B cell (primary cell): ENCODE measurements at regions of chr5 and their contacts with region 1.

Region 1: DNA sequence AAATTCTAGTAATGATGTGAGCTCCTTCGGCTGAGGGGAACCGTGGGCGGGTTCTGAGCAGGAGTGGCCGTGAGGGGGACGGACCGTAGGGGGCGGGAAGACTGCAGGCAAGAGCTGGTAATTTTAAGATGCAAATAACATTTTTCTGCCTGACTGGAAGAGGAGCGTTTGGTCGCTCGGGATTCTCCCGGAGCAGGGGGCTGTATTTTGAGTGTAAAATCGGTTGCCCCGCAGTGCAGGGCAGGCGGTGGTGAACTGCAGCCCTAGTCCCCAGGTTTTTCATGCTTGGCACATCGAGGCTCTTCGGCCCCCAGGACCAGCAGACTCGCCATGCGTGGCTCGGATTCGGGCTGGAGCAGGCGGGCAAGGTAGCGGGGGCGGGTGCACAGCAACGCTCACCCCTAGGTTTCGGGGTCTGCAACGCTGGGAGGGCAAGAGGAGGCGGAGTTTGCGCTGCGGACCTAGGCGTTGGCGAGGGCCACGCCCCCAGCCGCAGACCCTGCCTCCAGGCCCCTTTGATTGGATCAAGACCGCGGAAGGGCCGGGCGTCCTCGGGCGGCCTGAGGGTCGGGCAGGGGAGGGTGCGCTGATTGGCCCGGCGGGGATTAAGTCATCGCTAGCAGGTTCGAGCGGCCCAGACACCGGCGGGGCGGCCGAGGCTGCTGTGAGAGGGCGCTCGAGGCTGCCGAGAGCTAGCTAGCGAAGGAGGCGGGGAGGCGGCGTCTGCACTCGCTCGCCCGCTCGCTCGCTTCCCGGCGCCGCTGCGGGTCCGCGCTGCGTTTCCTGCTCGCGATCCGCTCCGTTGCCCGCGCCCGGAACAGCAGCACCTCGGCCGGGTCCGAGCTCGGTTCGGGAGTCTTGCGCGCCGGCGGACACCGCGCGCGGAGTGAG is at the start of gene ARHGAP26:
- DNase-seq: peak; percentile 96
- ATAC-seq: peak; percentile 94
- H3K4me3 ChIP-seq: peak within 1 kb of the TSS; percentile 78 to 90 (median 90)
- H3K4me3 Mint-ChIP-seq: peak within 1 kb of the TSS; percentile 97
- H3K27ac ChIP-seq: peak within 1 kb of the TSS; percentile 3 to 68
- H3K27ac Mint-ChIP-seq: peak within 1 kb of the TSS; percentile 85
- H3K4me1 ChIP-seq: peaks cover 11 to 12% of the 10 kb centered on the region in 2 donors
- H3K4me1 Mint-ChIP-seq: peaks cover 20% of the 10 kb centered on the region
- H3K27me3 ChIP-seq: no peaks in the 10 kb centered on the region
- H3K27me3 Mint-ChIP-seq: no peaks in the 10 kb centered on the region
- CTCF ChIP-seq: peak; percentile 9
- total RNA-seq, gene ARHGAP26: 22.5 and 27.8 TPM in 2 replicates

Region 2: DNA sequence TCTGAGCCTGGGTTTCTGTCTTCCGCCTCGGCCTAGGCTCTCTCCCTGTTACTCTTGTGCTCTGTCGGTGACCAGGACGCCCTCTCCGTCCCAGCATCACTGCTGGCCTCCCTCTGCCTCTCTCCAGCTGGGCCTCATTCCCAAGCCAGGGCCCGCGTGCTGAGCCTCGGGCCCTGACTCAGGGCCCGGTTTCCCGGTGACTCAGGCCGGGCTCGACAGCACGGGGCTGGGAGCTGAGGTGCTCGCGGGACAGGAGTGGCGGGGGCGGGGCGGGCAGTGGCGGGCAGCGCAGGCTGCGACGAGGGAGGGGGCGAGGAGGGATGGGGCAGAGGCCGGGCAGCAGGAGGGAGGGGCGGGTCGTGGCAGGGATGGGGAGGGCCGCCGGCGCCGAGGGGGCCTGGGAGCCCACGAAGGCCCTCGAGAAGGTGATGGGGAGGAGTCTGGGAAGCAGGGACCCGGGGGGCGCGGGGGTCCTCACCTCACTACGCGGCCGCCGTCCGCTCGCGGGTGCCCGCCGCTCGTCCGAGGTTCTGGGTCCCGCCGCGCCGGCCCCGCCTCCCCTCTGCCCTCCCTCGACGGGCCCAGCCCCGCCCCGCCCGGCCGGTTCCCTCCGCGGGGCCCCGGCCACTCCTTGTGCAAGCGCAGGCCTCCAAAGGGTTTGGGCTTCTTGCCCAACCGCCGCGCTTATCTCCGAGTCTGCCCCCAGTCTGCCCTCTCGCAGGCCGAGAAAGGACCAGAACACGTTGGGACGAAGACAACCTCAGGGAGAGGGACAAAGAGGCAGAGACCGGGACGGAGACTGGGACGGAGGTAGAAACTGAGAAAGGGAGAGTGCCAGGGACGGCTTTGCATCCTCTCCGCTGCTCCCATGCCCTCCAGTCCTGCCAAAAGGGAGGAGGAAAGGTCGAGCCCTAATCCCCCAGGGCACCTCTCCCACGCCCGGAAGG is 1088.0 kb before region 1 on chr5 and contains the start of gene ARAP3:
- CTCF ChIA-PET with region 1: no interaction called
- POLR2A ChIA-PET with region 1: no interaction called
- intact Hi-C with region 1: loop called (anchors 2 kb)
- DNase-seq: peak; percentile 54
- ATAC-seq: peak; percentile 74
- H3K4me3 ChIP-seq: peak within 1 kb of the TSS; percentile 41 to 76 (median 58)
- H3K4me3 Mint-ChIP-seq: peak within 1 kb of the TSS; percentile 89
- H3K27ac ChIP-seq: no peak within 1 kb of the TSS
- H3K27ac Mint-ChIP-seq: peak within 1 kb of the TSS; percentile 78
- H3K4me1 ChIP-seq: peaks cover 20 to 23% of the 10 kb centered on the region in 2 donors
- H3K4me1 Mint-ChIP-seq: peaks cover 20% of the 10 kb centered on the region
- H3K27me3 ChIP-seq: peaks cover 0 to 19% (median 0%) of the 10 kb centered on the region in 4 experiments
- H3K27me3 Mint-ChIP-seq: peaks cover 5% of the 10 kb centered on the region
- CTCF ChIP-seq: no peak
- total RNA-seq, gene ARAP3: 3.0 and 3.7 TPM in 2 replicates

Region 3: GRCh38 chr5:142795251-142795650 is 25.3 kb after region 1 on chr5:
- CTCF ChIA-PET with region 1: interaction called, 7 read pairs
- POLR2A ChIA-PET with region 1: no interaction called
- intact Hi-C with region 1: loop called (anchors 1 kb)
- DNase-seq: peak; percentile 80
- ATAC-seq: peak; percentile 78
- H3K4me3 ChIP-seq: no peak overlapping the region
- H3K4me3 Mint-ChIP-seq: peak overlapping the region; percentile 68
- H3K27ac ChIP-seq: peak overlapping the region; percentile 63 to 72
- H3K27ac Mint-ChIP-seq: peak overlapping the region; percentile 83
- H3K4me1 ChIP-seq: peaks cover 69 to 75% of the 10 kb centered on the region in 2 donors
- H3K4me1 Mint-ChIP-seq: peaks cover 74% of the 10 kb centered on the region
- H3K27me3 ChIP-seq: no peaks in the 10 kb centered on the region
- H3K27me3 Mint-ChIP-seq: no peaks in the 10 kb centered on the region
- CTCF ChIP-seq: no peak

Region 4: DNA sequence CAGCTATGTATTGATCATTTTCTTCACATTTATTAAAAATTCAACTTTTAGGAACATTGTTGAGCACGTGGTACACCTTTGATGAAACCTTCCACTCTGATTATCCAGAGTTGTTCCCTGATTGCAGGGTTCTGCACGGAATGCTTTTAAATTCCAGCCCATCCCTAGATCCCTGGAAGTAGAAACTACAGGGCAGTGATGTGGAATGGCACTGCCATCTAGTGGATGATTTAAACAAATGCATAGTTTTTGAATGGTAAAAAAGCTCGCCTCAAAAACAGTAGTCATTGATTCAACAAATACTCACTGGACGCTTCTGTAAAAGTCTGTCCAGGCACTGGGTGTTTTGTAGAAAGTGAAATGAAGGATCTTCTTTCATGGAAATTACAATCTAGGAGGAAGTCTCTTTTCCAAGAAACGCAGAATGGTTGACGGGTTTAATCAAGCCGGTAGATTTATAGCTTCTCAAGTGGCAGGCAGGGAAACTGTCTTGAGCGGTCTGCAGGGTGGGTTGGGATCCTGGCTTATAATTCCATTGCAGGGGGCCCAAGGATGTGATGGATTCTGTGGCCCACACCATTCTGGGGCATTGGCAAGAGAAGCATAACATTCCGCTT is 118.6 kb after region 1 on chr5:
- CTCF ChIA-PET with region 1: interaction called, 10 read pairs
- POLR2A ChIA-PET with region 1: no interaction called
- intact Hi-C with region 1: no loop called
- DNase-seq: peak; percentile 48
- ATAC-seq: peak; percentile 28
- H3K4me3 ChIP-seq: no peak overlapping the region
- H3K4me3 Mint-ChIP-seq: no peak overlapping the region
- H3K27ac ChIP-seq: no peak overlapping the region
- H3K27ac Mint-ChIP-seq: no peak overlapping the region
- H3K4me1 ChIP-seq: no peaks in the 10 kb centered on the region
- H3K4me1 Mint-ChIP-seq: no peaks in the 10 kb centered on the region
- H3K27me3 ChIP-seq: no peaks in the 10 kb centered on the region
- H3K27me3 Mint-ChIP-seq: no peaks in the 10 kb centered on the region
- CTCF ChIP-seq: peak; percentile 84

Region 5: GRCh38 chr5:144191998-144192397 is 1422.0 kb after region 1 on chr5:
- CTCF ChIA-PET with region 1: no interaction called
- POLR2A ChIA-PET with region 1: no interaction called
- intact Hi-C with region 1: loop called (anchors 5 kb)
- DNase-seq: peak; percentile 86
- ATAC-seq: peak; percentile 76
- H3K4me3 ChIP-seq: peak overlapping the region in 2 of 5 experiments; percentile 8 to 19
- H3K4me3 Mint-ChIP-seq: no peak overlapping the region
- H3K27ac ChIP-seq: peak overlapping the region; percentile 54 to 70
- H3K27ac Mint-ChIP-seq: no peak overlapping the region
- H3K4me1 ChIP-seq: peaks cover 46% of the 10 kb centered on the region in 2 donors
- H3K4me1 Mint-ChIP-seq: peaks cover 40% of the 10 kb centered on the region
- H3K27me3 ChIP-seq: no peaks in the 10 kb centered on the region
- H3K27me3 Mint-ChIP-seq: no peaks in the 10 kb centered on the region
- CTCF ChIP-seq: peak; percentile 84